ENCODE measurements at regions of chr1 and their contacts with region 1.

Region 1: GRCh38 chr1:247908766-247909165 is 11.3 kb upstream of the OR2T8 start:
- DNase-seq: no peak
- H3K4me3 Mint-ChIP-seq: no peak overlapping the region
- H3K27ac Mint-ChIP-seq: no peak overlapping the region
- H3K4me1 Mint-ChIP-seq: peaks cover 9% of the 10 kb centered on the region
- H3K27me3 Mint-ChIP-seq: peaks cover 4% of the 10 kb centered on the region

Region 2: GRCh38 chr1:247822060-247822459 is 86.7 kb before region 1 on chr1:
- intact Hi-C with region 1: no loop called
- DNase-seq: no peak
- H3K4me3 Mint-ChIP-seq: no peak overlapping the region
- H3K27ac Mint-ChIP-seq: no peak overlapping the region
- H3K4me1 Mint-ChIP-seq: no peaks in the 10 kb centered on the region
- H3K27me3 Mint-ChIP-seq: no peaks in the 10 kb centered on the region

Region 3: GRCh38 chr1:247936415-247936814 is 27.6 kb after region 1 on chr1:
- intact Hi-C with region 1: loop called (anchors 2 kb)
- DNase-seq: no peak
- H3K4me3 Mint-ChIP-seq: no peak overlapping the region
- H3K27ac Mint-ChIP-seq: no peak overlapping the region
- H3K4me1 Mint-ChIP-seq: no peaks in the 10 kb centered on the region
- H3K27me3 Mint-ChIP-seq: peaks cover 2% of the 10 kb centered on the region

Measured in activated T-helper 2 cell treated with anti-CD3 and anti-CD28 coated beads, Interferon-gamma antibody, Interleukin-2, Interleukin-4, amounts not matched to agents 10 μg/mL and 5 μg/mL and 100 μg/mL, durations not matched to agents 14 hours and 24 hours and 36 hours (primary cell).